Activated CD4-positive, alpha-beta T cell treated with anti-CD3 and anti-CD28 coated beads, Interleukin-2, amount 10 ng/mL, durations not matched to agents 24 days and 14 days (primary cell): ENCODE measurements at regions of chr2 and their contacts with region 1.

Region 1: DNA sequence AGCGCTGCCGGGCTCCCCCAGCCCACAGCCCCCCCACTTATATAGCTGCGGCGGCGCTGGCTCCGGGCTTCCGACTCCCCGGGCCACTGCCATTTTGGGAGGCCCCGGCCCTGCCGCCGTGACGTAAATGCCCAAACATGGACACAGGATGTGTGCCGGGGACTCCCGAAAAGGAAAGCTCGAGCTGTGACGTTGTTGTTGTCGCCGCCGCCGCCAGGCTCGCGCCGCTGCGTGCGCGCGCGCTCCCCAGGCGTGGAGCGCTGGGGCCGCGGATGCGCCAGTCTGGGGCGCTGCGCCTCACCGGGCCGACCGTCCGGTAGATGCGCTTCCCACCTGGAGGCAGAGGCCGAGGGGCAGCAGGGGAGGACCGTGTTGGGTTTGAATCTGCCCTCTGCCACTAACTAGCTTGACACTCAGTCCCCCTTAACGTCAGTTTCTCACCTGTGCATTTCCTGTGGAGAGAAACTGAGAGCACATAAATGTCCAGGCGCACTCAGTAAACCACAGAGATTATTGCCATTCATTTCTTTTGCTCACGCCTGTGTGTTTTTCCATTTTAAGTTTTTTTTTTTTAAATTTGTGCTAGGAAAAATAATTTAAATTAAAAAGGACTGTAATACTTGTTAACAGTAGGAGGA is at the start of gene EGR4:
- DNase-seq: peak; percentile 98
- H3K4me3 Mint-ChIP-seq: peak within 1 kb of the TSS; percentile 81
- H3K27ac Mint-ChIP-seq: no peak within 1 kb of the TSS
- H3K4me1 Mint-ChIP-seq: peaks cover 13% of the 10 kb centered on the region
- H3K27me3 Mint-ChIP-seq: peaks cover 74% of the 10 kb centered on the region
- total RNA-seq, gene EGR4: 1.2 and 1.5 TPM in 2 replicates

Region 2: DNA sequence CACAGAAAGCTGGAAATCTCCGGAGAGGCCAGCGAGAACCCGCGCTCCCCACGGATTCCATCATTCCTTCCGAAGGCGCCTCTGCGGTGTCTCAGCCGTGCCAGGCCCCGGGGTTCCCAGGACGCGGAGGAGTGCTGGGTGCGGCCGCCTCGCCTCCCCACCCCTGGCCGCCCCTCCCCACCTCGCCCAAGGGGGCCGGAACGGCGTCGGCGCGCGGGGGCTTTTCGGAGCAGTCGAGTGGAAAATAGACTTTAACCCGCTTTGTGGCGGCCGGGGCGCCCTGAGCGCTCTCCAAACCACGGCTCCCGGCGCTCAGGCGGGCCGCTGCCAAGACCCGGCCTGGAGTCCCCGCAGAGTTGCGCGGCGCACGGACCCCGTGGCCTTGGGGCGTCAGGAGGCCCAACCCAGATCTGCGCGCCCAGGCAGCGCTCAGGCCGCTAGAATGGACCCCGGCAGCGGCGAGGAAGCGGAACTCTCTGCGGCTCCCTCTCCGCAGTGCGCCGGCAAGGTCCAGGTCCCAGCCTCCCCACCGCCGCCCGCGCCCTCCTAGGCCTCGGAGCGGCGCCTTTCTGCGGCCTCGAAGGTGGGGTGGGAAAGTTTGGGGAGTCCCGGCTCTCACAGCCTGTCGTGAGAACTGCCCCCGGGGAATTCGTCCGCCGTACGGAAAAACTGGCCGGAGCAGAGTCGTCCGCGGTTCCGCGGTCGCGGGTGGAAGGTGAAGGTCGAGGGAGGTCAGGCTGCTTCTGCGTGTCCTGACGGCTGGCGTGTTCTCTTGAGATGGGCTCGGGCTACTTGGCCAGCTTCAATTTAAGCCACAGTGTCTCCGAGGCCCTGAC is 377.5 kb before region 1 on chr2:
- intact Hi-C with region 1: loop called (anchors 2 kb)
- DNase-seq: peak; percentile 77
- H3K4me3 Mint-ChIP-seq: peak overlapping the region; percentile 60
- H3K27ac Mint-ChIP-seq: no peak overlapping the region
- H3K4me1 Mint-ChIP-seq: peaks cover 10% of the 10 kb centered on the region
- H3K27me3 Mint-ChIP-seq: peaks cover 71% of the 10 kb centered on the region

Region 3: DNA sequence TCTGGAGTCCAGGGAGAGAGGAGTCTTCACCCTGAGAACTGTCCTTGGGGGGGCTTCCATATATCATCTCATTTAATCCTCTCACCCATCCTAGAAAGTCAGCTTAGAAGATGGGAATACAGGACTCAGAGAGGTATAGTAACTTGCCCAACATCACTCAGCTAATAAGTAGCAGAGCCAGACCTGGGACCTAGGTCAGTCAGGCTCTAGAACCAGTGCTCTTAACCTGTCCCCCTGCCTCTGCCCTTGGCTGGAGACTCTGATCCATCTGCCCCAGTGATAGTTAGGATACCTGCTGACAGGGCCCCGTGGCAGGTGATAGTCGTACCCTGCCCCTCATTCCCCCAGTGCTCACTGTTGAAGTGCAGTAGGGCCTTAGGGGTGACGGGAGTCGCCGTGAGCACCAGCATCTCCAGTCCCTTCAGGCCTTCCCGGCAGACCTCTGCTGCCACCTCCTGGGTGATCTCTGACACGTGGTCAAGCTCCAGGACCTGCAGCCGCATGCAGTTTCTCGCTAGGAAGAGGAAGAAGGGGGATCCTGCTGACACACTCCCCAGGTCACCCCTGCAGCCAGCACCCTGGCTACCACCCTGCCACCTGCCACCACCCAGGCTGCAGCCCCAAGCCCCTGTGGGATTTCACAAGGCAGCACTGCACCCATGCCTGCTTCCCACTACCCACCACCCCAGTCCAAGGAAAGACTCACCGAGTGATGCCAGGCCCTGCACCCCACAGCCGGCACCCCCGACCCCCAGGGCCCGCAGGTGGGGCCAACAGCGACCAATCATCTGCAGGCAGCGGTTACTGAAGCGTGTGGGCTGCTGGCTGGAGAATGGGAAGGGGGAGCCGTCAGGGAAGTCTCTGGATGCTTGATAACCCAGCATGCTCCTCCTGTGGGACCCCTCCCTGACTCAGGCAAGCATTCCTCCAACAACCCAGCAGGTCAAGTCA is 33.3 kb before region 1 on chr2:
- intact Hi-C with region 1: no loop called
- DNase-seq: no peak
- H3K4me3 Mint-ChIP-seq: no peak overlapping the region
- H3K27ac Mint-ChIP-seq: no peak overlapping the region
- H3K4me1 Mint-ChIP-seq: no peaks in the 10 kb centered on the region
- H3K27me3 Mint-ChIP-seq: no peaks in the 10 kb centered on the region

Region 4: DNA sequence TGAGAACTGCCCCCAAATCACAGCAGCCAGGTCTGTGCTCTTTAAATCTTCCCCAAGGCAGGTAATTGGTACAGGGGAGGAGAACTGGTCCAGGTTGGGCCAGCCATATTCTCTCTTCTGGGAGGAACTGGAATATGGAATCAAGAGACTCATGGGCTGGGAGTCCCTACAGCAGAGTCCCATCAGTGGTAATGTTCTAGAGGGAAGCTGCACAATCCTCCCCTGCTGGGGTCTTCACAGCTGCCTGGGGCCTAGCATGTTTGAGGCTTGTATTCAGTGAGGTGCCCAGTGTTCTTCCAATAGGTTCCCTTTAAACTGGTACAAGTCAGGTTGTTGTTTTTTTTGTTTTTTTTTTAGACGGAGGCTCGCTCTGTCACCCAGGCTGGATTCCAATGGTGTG is 20.8 kb after region 1 on chr2:
- intact Hi-C with region 1: no loop called
- DNase-seq: peak; percentile 34
- H3K4me3 Mint-ChIP-seq: no peak overlapping the region
- H3K27ac Mint-ChIP-seq: no peak overlapping the region
- H3K4me1 Mint-ChIP-seq: no peaks in the 10 kb centered on the region
- H3K27me3 Mint-ChIP-seq: peaks cover 2% of the 10 kb centered on the region

Region 5: GRCh38 chr2:73451263-73451972 is 157.8 kb after region 1 on chr2:
- intact Hi-C with region 1: no loop called
- DNase-seq: no peak
- H3K4me3 Mint-ChIP-seq: no peak overlapping the region
- H3K27ac Mint-ChIP-seq: no peak overlapping the region
- H3K4me1 Mint-ChIP-seq: no peaks in the 10 kb centered on the region
- H3K27me3 Mint-ChIP-seq: no peaks in the 10 kb centered on the region